RWPE1 (cell line): ENCODE measurements at regions of chr9 and their contacts with region 1.

Region 1: DNA sequence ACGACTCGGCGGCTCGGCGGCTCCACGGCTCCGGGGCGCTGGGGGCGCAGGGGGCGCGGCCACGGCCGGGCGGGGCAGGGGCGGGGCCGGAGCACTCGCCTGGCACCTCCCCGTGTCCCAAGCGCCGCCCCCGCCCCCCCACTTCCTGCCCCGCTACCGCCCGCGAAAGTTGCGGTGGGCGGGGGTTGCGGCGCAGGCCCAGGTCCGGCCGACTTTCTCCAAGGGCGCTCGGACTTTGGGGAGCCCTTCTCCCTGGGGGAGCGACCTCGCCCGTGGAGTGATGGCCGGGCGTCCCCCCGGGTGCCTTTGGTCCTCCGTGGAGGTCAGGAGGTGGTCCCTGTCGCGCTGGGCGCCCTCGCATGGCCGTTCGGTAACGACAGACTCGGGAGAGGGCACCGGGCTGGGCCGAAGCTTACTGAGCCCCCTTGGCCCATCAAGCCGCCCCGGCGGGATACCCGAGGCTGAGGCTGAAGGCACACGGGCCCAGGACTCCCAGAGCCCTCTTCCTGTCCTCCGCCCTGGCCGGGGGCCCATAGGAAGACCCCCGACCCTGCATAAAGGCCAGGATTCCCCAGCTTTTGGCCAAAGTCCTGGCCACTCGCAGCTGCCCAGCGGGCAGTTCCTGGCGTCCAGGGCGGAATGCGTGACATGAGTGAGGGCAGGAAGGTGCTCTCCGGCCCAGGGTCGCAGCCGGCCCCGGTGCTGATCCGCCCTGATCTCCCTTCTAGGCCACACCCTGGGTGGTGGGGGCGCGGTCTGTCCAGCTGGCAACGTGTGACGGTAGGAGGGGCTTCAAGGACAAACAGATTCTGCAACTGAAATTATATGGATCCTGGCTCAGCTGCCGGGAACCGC is 883 bp upstream of the VAV2 start:
- DNase-seq: peak; percentile 93
- H3K27ac ChIP-seq: peak overlapping the region; percentile 99
- CTCF ChIP-seq: peak; percentile 71

Region 2: DNA sequence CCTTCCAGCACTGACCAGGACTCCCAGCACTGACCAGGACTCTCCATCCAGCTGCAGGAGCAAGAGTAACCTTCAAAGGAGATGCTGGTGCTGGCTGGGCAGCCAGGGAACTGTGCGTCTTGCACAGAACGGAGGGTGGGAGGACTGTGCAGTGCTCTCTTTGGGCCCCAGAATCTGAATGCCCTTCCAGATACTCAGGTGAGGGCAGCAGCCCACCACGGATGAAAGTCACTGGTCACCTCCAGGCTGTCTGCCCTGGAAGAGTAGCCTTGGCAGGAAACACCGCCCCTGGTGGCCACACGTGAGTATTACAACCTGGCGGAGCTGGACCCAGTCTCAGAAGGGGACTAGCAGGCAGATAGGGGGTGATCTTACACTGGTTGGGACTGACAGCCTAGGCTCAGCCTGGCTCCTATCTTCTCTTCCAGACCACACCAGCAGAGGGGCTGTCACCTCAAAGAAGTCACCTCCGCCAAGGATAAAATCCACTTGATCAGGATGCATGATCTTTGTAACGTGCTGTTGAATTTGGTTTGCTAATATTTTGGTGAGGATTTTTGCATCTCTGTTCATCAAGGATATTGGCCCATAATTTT is 250.1 kb before region 1 on chr9:
- CTCF ChIA-PET with region 1: interaction called, 12 read pairs
- POLR2A ChIA-PET with region 1: no interaction called
- DNase-seq: peak; percentile 94
- H3K27ac ChIP-seq: no peak overlapping the region
- CTCF ChIP-seq: peak; percentile 100

Region 3: GRCh38 chr9:133782157-133783130 is 210.6 kb before region 1 on chr9:
- CTCF ChIA-PET with region 1: interaction called, 102 read pairs
- POLR2A ChIA-PET with region 1: interaction called, 4 read pairs
- DNase-seq: peak; percentile 73
- H3K27ac ChIP-seq: peak overlapping the region; percentile 63
- CTCF ChIP-seq: peak; percentile 95

Region 4: GRCh38 chr9:133800266-133800665 is 192.7 kb before region 1 on chr9:
- CTCF ChIA-PET with region 1: interaction called, 10 read pairs
- POLR2A ChIA-PET with region 1: no interaction called
- DNase-seq: no peak
- H3K27ac ChIP-seq: peak overlapping the region; percentile 63
- CTCF ChIP-seq: no peak

Region 5: DNA sequence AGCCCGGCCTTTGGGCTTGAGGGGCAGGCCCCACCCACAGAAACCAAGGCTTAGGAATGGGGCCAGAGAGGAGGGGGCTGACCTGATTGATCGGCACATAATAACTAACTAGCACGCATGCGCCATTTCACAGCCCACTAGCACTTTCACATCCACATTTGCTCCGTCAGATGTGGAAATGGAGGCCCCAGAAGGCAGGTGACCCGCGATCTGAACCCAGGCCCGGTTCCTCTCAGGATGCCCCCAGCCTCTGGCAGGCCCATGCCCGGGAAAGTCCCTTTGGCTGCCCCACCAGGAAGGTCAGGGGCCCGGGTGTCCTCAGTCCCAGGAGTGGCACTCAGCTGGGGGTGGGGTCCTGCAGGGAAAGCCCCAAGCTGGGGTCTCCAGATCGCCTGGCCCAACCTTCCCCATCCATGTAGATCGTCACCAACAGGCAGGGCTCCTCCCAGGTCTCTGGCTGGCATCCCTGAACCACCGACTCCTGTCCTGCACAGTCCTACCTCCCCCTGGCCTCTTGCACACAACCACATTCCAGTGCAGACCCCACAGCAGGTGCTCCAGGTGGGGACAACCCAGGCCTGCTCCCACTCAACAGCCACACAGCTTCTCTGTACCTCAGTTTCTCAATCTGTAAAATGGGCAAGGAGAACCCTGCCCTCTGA is 47.6 kb before region 1 on chr9:
- CTCF ChIA-PET with region 1: interaction called, 11 read pairs
- POLR2A ChIA-PET with region 1: interaction called, 4 read pairs
- DNase-seq: no peak
- H3K27ac ChIP-seq: peak overlapping the region; percentile 95
- CTCF ChIP-seq: no peak

Region 6: GRCh38 chr9:134004131-134004873 is 11.3 kb after region 1 on chr9:
- CTCF ChIA-PET with region 1: interaction called, 10 read pairs
- POLR2A ChIA-PET with region 1: interaction called, 5 read pairs
- DNase-seq: no peak
- H3K27ac ChIP-seq: no peak overlapping the region
- CTCF ChIP-seq: no peak

Region 7: GRCh38 chr9:134099123-134099787 is 106.2 kb after region 1 on chr9:
- CTCF ChIA-PET with region 1: interaction called, 21 read pairs
- POLR2A ChIA-PET with region 1: interaction called, 3 read pairs
- DNase-seq: peak; percentile 77
- H3K27ac ChIP-seq: no peak overlapping the region
- CTCF ChIP-seq: peak; percentile 83